ENCODE measurements at regions of chr2 and their contacts with region 1.

Region 1: DNA sequence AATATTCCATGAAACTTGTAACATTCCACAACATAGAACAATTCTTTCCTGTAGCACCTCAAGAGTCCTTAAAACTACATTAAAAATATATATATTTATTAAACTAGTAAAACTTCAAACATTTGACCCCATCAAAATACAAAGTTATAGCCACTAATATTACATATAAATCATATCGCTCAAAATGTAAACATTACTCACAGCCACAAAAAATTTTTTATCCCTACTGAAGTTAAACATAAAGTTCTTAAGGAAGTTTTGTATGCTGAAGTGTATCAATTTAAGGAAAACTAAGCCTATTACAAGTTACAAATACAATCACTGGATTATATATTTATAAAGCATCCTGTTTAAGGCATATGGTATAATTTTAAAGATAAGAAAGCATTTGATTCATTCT is 80.3 kb upstream of the DNER start:
- DNase-seq: no peak
- H3K4me3 ChIP-seq: no peak overlapping the region
- H3K27ac ChIP-seq: no peak overlapping the region
- H3K4me1 ChIP-seq: no peaks in the 10 kb centered on the region
- H3K27me3 ChIP-seq: no peaks in the 10 kb centered on the region
- CTCF ChIP-seq: no peak

Region 2: GRCh38 chr2:229408356-229408755 is 386.3 kb before region 1 on chr2:
- CTCF ChIA-PET with region 1: no interaction called
- dilution Hi-C with region 1: no loop called
- in situ Hi-C with region 1: no loop called
- intact Hi-C with region 1: no loop called
- DNase-seq: peak; percentile 97
- H3K4me3 ChIP-seq: no peak overlapping the region
- H3K27ac ChIP-seq: peak overlapping the region; percentile 98
- H3K4me1 ChIP-seq: peaks cover 24% of the 10 kb centered on the region
- H3K27me3 ChIP-seq: no peaks in the 10 kb centered on the region
- CTCF ChIP-seq: no peak

Region 3: GRCh38 chr2:229731916-229732315 is 62.7 kb before region 1 on chr2:
- CTCF ChIA-PET with region 1: no interaction called
- dilution Hi-C with region 1: loop called (anchors 5 kb)
- in situ Hi-C with region 1: no loop called
- intact Hi-C with region 1: no loop called
- DNase-seq: no peak
- H3K4me3 ChIP-seq: no peak overlapping the region
- H3K27ac ChIP-seq: no peak overlapping the region
- H3K4me1 ChIP-seq: no peaks in the 10 kb centered on the region
- H3K27me3 ChIP-seq: no peaks in the 10 kb centered on the region
- CTCF ChIP-seq: no peak

Region 4: DNA sequence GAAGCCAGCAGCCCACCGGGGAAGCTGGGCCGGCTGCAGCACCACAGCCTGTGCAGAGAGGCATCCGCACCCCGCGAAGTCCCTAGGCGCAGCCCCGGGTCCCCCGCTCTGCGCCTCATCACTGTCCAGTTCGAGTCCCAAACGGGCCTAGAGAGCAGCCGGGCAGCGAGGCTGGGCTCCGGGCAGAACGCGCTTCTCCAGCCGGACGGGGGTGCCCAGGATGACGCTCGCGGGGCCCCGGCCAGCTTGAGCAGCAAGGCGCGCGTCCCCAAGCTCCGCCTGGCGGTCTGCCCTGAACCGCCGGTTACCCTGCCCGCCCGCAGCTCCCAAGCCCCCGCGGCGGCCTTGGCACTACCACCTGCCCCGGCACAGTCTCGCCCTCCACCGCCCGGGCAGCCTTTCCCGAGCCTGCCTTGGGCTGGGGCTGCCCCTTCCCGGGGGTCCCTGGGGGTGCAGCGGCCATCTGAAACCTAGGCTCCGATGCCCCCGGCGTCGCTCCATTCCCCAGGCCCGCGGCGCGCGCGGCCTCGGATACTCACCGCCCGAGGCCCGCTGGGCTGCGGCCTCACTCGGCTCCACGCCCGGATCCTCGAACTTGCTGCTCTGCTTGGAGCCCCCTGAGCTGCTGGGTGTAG is 273.5 kb after region 1 on chr2:
- CTCF ChIA-PET with region 1: no interaction called
- dilution Hi-C with region 1: no loop called
- in situ Hi-C with region 1: no loop called
- intact Hi-C with region 1: no loop called
- DNase-seq: peak; percentile 34
- H3K4me3 ChIP-seq: peak overlapping the region; percentile 38 to 50 (median 50)
- H3K27ac ChIP-seq: no peak overlapping the region
- H3K4me1 ChIP-seq: peaks cover 21% of the 10 kb centered on the region
- H3K27me3 ChIP-seq: no peaks in the 10 kb centered on the region
- CTCF ChIP-seq: peak in 1 of 2 donors; percentile 10